Cardiac septum (tissue), 1 donor: ENCODE measurements at regions of chr20 and their contacts with region 1.

Region 1: DNA sequence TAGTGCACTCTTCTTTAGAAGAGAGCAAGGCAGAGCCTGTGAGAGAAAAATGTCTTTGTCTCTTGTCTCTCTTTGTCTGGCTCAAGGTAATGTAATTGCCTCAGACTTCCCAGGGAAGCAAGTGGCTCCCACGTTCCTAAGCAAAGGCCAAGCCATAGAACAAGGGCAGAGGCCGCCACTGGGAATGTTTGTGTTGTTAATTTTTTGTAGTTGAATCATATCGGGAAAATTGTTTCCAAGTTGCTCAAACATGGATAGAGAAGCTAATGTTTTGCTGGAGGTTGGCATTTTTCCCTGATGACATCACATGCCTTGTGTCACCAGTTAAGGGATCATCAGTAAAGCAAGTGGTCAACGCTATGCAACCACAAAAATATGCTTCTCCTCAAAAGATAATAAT is 211.5 kb upstream of the FOXA2 start:
- DNase-seq: no peak

Region 2: GRCh38 chr20:22402550-22402949 is 393.3 kb before region 1 on chr20:
- intact Hi-C with region 1: no loop called
- DNase-seq: no peak

Region 3: DNA sequence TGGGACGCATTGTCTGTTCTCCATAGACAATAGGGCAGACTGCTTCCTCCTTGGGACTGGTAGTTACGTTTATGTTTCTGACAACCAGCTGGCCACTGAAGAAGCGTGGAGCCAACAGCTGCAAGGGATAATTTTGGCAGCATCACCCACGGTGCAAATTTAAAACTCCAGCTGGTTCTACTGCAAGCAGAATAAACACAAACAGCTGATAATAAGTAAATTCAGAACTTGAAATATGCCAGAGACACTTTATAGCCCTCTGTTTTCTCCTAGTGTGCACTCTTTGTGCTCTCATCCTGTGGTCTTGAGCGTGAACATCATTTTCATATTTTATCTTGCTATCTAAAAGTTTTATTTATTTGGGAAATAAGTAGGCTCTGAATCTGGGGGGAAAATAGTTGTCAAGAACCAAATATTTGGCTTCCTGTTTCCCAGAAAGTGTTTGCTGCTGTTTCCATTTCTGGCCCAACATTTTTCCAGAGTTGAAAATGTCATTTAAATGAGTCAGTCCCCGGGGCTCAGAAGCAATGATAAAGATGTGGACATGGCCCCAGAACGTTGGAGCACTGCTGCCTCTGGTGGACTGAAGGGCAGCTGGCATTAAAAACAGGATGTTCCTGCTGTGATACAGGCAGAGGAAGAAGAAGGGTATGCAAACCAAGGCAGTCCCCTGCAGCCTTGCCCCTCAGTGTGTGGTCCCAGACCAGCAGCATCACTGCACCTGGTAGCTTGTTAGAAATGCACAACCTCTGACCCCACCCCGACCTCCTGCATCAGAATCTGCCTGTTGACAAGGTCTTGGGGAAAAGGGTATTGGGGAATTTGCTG is 266.1 kb after region 1 on chr20:
- intact Hi-C with region 1: loop called (anchors 10 kb)
- DNase-seq: no peak